Calu3 (cell line): ENCODE measurements at regions of chr3 and their contacts with region 1.

Region 1: DNA sequence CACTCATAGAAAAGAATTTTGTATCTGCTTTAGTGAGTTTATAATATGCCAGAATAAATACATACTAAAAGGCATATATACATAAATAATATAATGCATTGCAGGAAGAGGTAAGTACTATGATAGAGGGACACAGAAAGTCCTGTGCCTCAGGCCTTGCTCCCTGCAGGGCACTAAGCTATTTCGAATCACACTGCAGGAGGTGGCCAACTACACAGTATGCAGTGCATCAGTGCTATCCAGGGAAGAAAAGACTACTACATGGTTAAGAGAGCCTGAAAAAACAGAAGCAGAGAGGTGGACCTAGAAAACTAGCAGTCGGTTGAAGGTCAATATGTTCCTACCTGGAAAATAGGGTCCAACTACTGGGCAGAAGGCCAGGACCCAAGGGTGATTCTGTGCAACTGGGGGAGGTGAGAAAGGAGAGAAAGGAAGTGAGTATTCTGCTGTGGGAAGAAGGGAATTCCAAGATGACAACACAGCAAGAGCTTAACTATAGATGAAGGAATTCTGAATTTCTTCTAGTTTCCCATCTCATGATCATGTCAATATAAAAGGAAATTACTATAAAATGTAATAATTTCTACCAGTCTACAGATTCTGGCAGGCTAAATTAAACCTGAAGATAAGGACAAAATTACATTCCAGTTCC is 218.0 kb downstream of the ZBTB20 start:
- DNase-seq: no peak
- H3K4me3 Mint-ChIP-seq: no peak overlapping the region
- H3K27ac Mint-ChIP-seq: no peak overlapping the region
- H3K4me1 Mint-ChIP-seq: peaks cover 7% of the 10 kb centered on the region
- H3K27me3 Mint-ChIP-seq: no peaks in the 10 kb centered on the region
- CTCF ChIP-seq: no peak

Region 2: GRCh38 chr3:114892135-114892879 is 36.8 kb before region 1 on chr3:
- CTCF ChIA-PET with region 1: interaction called, 13 read pairs
- intact Hi-C with region 1: no loop called
- DNase-seq: no peak
- H3K4me3 Mint-ChIP-seq: no peak overlapping the region
- H3K27ac Mint-ChIP-seq: no peak overlapping the region
- H3K4me1 Mint-ChIP-seq: no peaks in the 10 kb centered on the region
- H3K27me3 Mint-ChIP-seq: no peaks in the 10 kb centered on the region
- CTCF ChIP-seq: no peak

Region 3: GRCh38 chr3:114902691-114903101 is 26.4 kb before region 1 on chr3:
- CTCF ChIA-PET with region 1: no interaction called
- intact Hi-C with region 1: no loop called
- DNase-seq: peak; percentile 8
- H3K4me3 Mint-ChIP-seq: peak overlapping the region; percentile 3
- H3K27ac Mint-ChIP-seq: no peak overlapping the region
- H3K4me1 Mint-ChIP-seq: peaks cover 33% of the 10 kb centered on the region
- H3K27me3 Mint-ChIP-seq: no peaks in the 10 kb centered on the region
- CTCF ChIP-seq: no peak